ENCODE measurements at regions of chr2 and their contacts with region 1.

Region 1: GRCh38 chr2:44087036-44087713 is 81.5 kb upstream of the PPM1B start:
- DNase-seq: peak; percentile 66 to 87
- H3K4me3 ChIP-seq: peak overlapping the region; percentile 42; the same call in 1 of the 2 replicates
- H3K27ac ChIP-seq: no peak overlapping the region
- H3K4me1 ChIP-seq: peaks cover 10% of the 10 kb centered on the region; the same call in 1 of the 2 replicates
- H3K27me3 ChIP-seq: no peaks in the 10 kb centered on the region
- CTCF ChIP-seq: peak; percentile 99

Region 2: DNA sequence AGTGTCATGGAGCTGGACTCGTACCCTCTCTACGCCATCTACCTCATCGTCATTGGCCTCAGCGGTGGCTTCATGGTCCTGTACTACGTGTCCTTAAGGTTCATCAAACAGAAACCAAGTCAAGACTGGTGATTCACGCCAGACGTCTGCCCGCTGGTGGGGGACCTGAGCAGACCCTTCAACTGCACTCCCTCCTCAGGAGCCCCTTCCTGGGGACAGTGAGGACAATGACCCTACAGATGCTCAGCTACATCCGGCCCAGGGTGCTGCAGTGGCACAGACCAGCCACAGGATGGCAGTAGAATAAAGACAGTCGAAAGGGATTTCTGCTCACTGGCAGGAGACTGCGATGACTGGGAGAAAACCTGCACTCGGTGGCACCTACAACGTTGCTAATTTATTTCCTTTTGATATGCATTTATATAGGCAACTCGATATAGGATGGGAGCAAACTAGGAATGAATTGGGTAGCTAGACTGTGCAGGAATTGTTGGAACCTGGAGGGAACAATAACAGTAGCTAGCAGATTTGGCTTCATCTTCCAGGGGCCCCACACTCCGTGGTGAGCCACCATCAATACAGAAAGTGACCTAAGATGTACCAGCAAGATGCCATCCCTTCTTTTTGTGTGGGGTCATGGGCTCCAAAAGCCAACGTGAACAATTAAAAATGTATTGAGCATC is 209.3 kb before region 1 on chr2:
- CTCF ChIA-PET with region 1: no interaction called
- POLR2A ChIA-PET with region 1: no interaction called
- intact Hi-C with region 1: loop called (anchors 5 kb)
- DNase-seq: peak; percentile 64 to 71
- H3K4me3 ChIP-seq: no peak overlapping the region
- H3K27ac ChIP-seq: no peak overlapping the region
- H3K4me1 ChIP-seq: peaks cover 16% of the 10 kb centered on the region
- H3K27me3 ChIP-seq: peaks cover 42% of the 10 kb centered on the region
- CTCF ChIP-seq: peak; percentile 99

Region 3: GRCh38 chr2:44184106-44184505 is 96.9 kb after region 1 on chr2:
- CTCF ChIA-PET with region 1: no interaction called
- POLR2A ChIA-PET with region 1: no interaction called
- intact Hi-C with region 1: no loop called
- DNase-seq: no peak
- H3K4me3 ChIP-seq: no peak overlapping the region
- H3K27ac ChIP-seq: no peak overlapping the region
- H3K4me1 ChIP-seq: no peaks in the 10 kb centered on the region
- H3K27me3 ChIP-seq: no peaks in the 10 kb centered on the region
- CTCF ChIP-seq: no peak

Region 4: DNA sequence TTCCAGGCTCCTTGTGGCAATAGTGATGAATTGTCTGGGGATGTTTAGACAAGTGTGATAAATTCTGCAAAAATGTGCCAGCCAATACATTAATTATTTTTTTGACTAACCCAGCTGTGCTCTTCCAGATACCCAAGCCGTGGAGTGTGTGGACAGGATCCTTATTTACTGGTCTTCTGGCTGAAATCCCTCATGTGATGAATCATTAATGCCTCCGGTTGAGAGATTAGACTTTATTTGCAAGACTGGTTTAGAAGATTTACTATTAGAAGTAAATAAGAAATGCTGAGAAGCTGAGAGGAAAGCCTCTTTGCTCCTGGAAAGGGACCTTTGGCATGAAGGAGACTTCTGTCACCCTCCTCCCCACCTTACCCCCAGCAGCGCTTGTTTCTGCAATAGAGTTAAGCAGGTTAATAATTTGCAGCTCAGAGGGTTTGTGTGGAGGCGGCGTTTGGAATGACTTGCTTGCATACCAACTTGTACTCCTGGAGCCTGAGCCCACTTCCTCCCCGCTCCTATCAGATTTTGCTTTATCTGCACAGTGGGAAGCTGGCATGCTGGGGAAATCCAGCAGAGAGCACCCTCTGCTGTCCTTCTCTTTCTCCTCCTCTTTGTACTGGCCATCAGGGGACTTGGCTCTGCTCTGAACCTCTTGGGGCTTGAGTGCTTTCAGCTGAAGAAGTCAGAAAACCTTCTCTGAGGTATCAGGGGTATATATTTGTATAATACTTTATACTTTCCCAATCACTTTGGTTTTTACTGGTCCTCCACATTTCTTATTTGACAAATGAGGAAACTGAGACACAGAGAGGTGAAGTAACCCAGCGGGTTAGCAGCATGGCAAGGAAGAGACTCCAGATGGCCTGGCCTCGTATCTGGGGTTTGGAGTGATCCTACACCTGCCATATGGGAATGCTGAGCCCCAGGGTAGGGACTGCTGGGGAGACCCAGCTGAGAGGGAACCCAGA is 204.4 kb after region 1 on chr2:
- CTCF ChIA-PET with region 1: interaction called, 3 read pairs
- POLR2A ChIA-PET with region 1: no interaction called
- intact Hi-C with region 1: loop called (anchors 1 kb)
- DNase-seq: peak; percentile 71 to 97
- H3K4me3 ChIP-seq: peak overlapping the region; percentile 5; the same call in 1 of the 2 replicates
- H3K27ac ChIP-seq: peak overlapping the region; percentile 49
- H3K4me1 ChIP-seq: peaks cover 30% of the 10 kb centered on the region
- H3K27me3 ChIP-seq: no peaks in the 10 kb centered on the region
- CTCF ChIP-seq: peak; percentile 76

Region 5: DNA sequence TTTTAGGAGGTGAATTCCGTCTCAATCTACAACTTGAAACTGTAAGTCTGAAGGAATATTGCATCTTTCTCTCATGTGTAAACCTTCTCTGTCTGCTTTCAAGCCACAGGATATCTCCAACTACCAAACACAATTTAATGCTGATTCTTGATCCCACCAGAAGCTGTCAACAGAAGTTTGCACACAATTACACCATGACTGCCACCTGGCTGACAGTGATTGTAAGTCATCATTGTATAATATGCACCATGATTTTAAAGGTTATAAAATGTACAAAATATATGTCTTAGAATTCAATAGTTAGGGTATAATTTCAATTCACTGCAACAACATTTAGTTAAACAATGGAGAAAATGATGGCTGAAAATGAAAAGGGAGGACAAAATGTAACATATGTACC is 255.7 kb after region 1 on chr2:
- CTCF ChIA-PET with region 1: no interaction called
- POLR2A ChIA-PET with region 1: no interaction called
- intact Hi-C with region 1: loop called (anchors 2 kb)
- DNase-seq: no peak
- H3K4me3 ChIP-seq: no peak overlapping the region
- H3K27ac ChIP-seq: no peak overlapping the region
- H3K4me1 ChIP-seq: no peaks in the 10 kb centered on the region
- H3K27me3 ChIP-seq: no peaks in the 10 kb centered on the region
- CTCF ChIP-seq: peak; percentile 73

Measured in PC-9 (cell line).